Heart left ventricle (tissue), 16 donors: ENCODE measurements at regions of chr22 and their contacts with region 1.

Region 1: GRCh38 chr22:35350539-35351503 is 30.1 kb upstream of the HMOX1 start:
- DNase-seq: peak; percentile 93 to 96 (median 94)
- ATAC-seq: peak; percentile 89 to 90 (median 90)
- H3K4me3 ChIP-seq: peak overlapping the region; percentile 27 to 69 (median 55)
- H3K27ac ChIP-seq: peak overlapping the region in 11 of 12 donors; percentile 51 to 93 (median 68)
- H3K4me1 ChIP-seq: peaks cover 0 to 47% (median 11%) of the 10 kb centered on the region in 12 donors
- H3K27me3 ChIP-seq: no peaks in the 10 kb centered on the region
- CTCF ChIP-seq: peak; percentile 81 to 99 (median 92)
- POLR2A ChIP-seq: peak in 1 of 2 donors; percentile 48

Region 2: GRCh38 chr22:35384527-35384926 is 33.7 kb after region 1 on chr22:
- intact Hi-C with region 1: no loop called
- DNase-seq: no peak
- ATAC-seq: no peak
- H3K4me3 ChIP-seq: peak overlapping the region in 1 of 12 donors; percentile 75
- H3K27ac ChIP-seq: no peak overlapping the region
- H3K4me1 ChIP-seq: peaks cover 0 to 28% (median 9%) of the 10 kb centered on the region in 12 donors
- H3K27me3 ChIP-seq: no peaks in the 10 kb centered on the region
- CTCF ChIP-seq: no peak
- POLR2A ChIP-seq: no peak

Region 3: GRCh38 chr22:35409783-35410662 is 59.2 kb after region 1 on chr22:
- intact Hi-C with region 1: loop called in 1 of 10 experiments (anchors 5 kb)
- DNase-seq: peak in 4 of 5 donors; percentile 40 to 65 (median 46)
- ATAC-seq: peak in 3 of 4 donors; percentile 46 to 78 (median 63)
- H3K4me3 ChIP-seq: no peak overlapping the region
- H3K27ac ChIP-seq: peak overlapping the region in 3 of 12 donors; percentile 22 to 78 (median 34)
- H3K4me1 ChIP-seq: peaks cover 0 to 45% (median 0%) of the 10 kb centered on the region in 12 donors
- H3K27me3 ChIP-seq: no peaks in the 10 kb centered on the region
- CTCF ChIP-seq: no peak
- POLR2A ChIP-seq: no peak

Region 4: GRCh38 chr22:35582861-35583670 is 232.2 kb after region 1 on chr22:
- intact Hi-C with region 1: loop called (anchors 1 to 5 kb)
- DNase-seq: peak in 4 of 5 donors; percentile 47 to 68 (median 63)
- ATAC-seq: peak in 1 of 4 donors; percentile 16
- H3K4me3 ChIP-seq: no peak overlapping the region
- H3K27ac ChIP-seq: peak overlapping the region in 7 of 12 donors; percentile 3 to 64 (median 29)
- H3K4me1 ChIP-seq: peaks cover 0 to 29% (median 11%) of the 10 kb centered on the region in 12 donors
- H3K27me3 ChIP-seq: no peaks in the 10 kb centered on the region
- CTCF ChIP-seq: peak; percentile 89 to 97 (median 93)
- POLR2A ChIP-seq: no peak

Region 5: DNA sequence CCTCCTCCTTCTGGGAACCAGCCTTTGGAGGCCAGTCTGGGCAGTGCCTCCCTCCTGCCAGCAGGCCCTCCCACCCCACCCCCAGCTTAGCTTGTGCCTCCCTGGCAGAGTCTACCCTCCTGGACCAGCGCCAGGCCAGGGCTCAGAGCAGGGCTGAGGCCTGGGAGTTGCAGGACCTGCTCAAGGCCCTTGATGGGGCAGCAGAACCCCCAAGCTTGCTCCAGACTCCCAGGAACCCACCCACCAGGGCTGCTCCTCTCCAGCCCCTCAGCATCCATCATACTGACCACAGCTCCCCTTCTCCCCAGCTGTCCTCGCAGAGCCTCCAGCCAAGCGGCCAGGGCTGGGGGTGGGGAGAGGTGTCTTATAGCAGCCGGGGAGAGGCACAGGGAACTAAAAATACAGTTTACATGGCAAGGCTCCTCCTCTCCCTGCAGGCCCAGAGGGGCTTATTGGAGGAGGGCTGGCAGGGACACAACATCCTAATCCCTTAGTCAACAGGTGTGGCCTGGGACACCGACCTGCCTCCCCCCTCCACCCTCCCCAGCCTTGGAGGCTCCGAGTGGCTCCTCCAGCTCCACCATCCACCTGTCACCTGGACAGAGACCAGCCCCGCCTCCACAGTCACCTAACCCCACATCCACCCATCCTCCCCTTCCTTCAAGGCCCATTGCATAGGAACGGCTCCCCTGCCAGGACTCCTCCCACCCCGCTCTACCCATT is 271.5 kb after region 1 on chr22:
- intact Hi-C with region 1: loop called in 4 of 10 experiments (anchors 1 to 10 kb)
- DNase-seq: peak; percentile 66 to 86 (median 80)
- ATAC-seq: peak; percentile 49 to 63 (median 55)
- H3K4me3 ChIP-seq: peak overlapping the region in 1 of 12 donors; percentile 11
- H3K27ac ChIP-seq: peak overlapping the region; percentile 61 to 96 (median 87)
- H3K4me1 ChIP-seq: peaks cover 0 to 55% (median 23%) of the 10 kb centered on the region in 12 donors
- H3K27me3 ChIP-seq: no peaks in the 10 kb centered on the region
- CTCF ChIP-seq: peak in 1 of 12 donors; percentile 9
- POLR2A ChIP-seq: no peak